ENCODE measurements at regions of chr6 and their contacts with region 1.

Region 1: GRCh38 chr6:98845211-98846020 is 11.0 kb downstream of the POU3F2 start:
- DNase-seq: peak; percentile 35 to 79 (median 60)
- ATAC-seq: peak; percentile 73
- H3K4me3 ChIP-seq: no peak overlapping the region
- H3K4me3 Mint-ChIP-seq: peak overlapping the region; percentile 76
- H3K27ac ChIP-seq: no peak overlapping the region
- H3K27ac Mint-ChIP-seq: no peak overlapping the region
- H3K4me1 ChIP-seq: peaks cover 43% of the 10 kb centered on the region
- H3K4me1 Mint-ChIP-seq: peaks cover 35% of the 10 kb centered on the region
- H3K27me3 ChIP-seq: peaks cover 80 to 88% of the 10 kb centered on the region in 2 experiments
- H3K27me3 Mint-ChIP-seq: peaks cover 90% of the 10 kb centered on the region
- CTCF ChIP-seq: peak; percentile 82

Region 2: GRCh38 chr6:97068211-97068610 is 1777.2 kb before region 1 on chr6:
- CTCF ChIA-PET with region 1: no interaction called
- POLR2A ChIA-PET with region 1: no interaction called
- intact Hi-C with region 1: loop called in 1 of 2 experiments (anchors 5 kb)
- DNase-seq: peak in 4 of 14 experiments; percentile 5 to 34 (median 15)
- ATAC-seq: no peak
- H3K4me3 ChIP-seq: no peak overlapping the region
- H3K4me3 Mint-ChIP-seq: no peak overlapping the region
- H3K27ac ChIP-seq: no peak overlapping the region
- H3K27ac Mint-ChIP-seq: no peak overlapping the region
- H3K4me1 ChIP-seq: no peaks in the 10 kb centered on the region
- H3K4me1 Mint-ChIP-seq: no peaks in the 10 kb centered on the region
- H3K27me3 ChIP-seq: no peaks in the 10 kb centered on the region
- H3K27me3 Mint-ChIP-seq: no peaks in the 10 kb centered on the region
- CTCF ChIP-seq: peak; percentile 39

Region 3: GRCh38 chr6:97186416-97186999 is 1658.9 kb before region 1 on chr6:
- CTCF ChIA-PET with region 1: no interaction called
- POLR2A ChIA-PET with region 1: no interaction called
- intact Hi-C with region 1: loop called (anchors 2 to 5 kb)
- DNase-seq: peak; percentile 36 to 77 (median 56)
- ATAC-seq: peak; percentile 77
- H3K4me3 ChIP-seq: no peak overlapping the region
- H3K4me3 Mint-ChIP-seq: no peak overlapping the region
- H3K27ac ChIP-seq: no peak overlapping the region
- H3K27ac Mint-ChIP-seq: no peak overlapping the region
- H3K4me1 ChIP-seq: no peaks in the 10 kb centered on the region
- H3K4me1 Mint-ChIP-seq: no peaks in the 10 kb centered on the region
- H3K27me3 ChIP-seq: no peaks in the 10 kb centered on the region
- H3K27me3 Mint-ChIP-seq: no peaks in the 10 kb centered on the region
- CTCF ChIP-seq: peak; percentile 97

Region 4: DNA sequence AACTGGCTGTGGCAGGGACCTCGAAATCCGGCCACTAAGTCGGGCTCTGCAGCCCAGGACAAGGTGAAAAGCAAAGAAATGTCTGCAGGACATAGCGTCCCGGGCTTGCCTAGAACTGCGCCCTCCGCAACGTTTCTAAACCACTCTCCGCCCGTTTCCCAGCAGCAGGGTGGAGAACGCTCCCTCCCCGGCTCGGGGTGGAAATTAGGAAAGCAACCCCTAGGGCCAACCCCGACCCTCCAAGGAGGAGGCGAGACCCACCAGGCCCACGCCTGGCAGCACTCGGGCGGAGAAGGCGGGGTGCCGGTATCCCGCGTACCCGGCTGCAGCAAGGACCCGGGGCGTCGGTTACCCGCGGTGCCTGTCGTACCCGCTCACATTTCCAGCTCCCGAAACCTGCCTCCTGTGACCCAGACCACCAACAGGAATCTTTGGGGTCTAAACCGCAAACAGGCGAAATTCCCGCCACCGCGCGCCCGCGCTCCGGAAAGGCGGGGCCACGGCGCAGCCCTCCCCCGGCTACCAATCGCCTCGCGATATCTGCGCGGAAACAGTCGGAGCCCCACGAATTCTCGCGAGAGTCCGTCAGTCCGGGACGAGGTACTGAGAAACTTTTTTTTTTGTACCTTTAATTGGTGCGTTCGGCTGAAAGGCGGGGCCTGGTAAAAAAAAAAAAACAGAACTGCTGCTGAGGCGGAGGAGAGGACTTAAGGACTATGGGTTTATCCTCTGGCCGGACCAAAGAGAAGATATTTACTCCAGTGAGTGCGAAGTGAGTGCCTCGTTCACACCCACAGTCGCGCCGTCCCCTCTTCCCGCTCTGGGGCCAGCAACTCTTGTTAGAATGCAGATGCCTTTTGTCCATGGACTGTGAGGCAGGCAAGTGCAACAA is 1562.4 kb before region 1 on chr6 and contains the start of gene MMS22L:
- CTCF ChIA-PET with region 1: no interaction called
- POLR2A ChIA-PET with region 1: no interaction called
- intact Hi-C with region 1: loop called in 1 of 2 experiments (anchors 10 kb)
- DNase-seq: peak; percentile 82 to 97 (median 90)
- ATAC-seq: peak; percentile 96
- H3K4me3 ChIP-seq: peak within 1 kb of the TSS; percentile 88
- H3K4me3 Mint-ChIP-seq: peak within 1 kb of the TSS; percentile 89
- H3K27ac ChIP-seq: peak within 1 kb of the TSS in 1 of 2 donors; percentile 38
- H3K27ac Mint-ChIP-seq: peak within 1 kb of the TSS; percentile 78
- H3K4me1 ChIP-seq: peaks cover 8% of the 10 kb centered on the region
- H3K4me1 Mint-ChIP-seq: peaks cover 28% of the 10 kb centered on the region
- H3K27me3 ChIP-seq: no peaks in the 10 kb centered on the region
- H3K27me3 Mint-ChIP-seq: no peaks in the 10 kb centered on the region
- CTCF ChIP-seq: no peak
- total RNA-seq, gene MMS22L: 5.3 to 5.8 TPM

Region 5: DNA sequence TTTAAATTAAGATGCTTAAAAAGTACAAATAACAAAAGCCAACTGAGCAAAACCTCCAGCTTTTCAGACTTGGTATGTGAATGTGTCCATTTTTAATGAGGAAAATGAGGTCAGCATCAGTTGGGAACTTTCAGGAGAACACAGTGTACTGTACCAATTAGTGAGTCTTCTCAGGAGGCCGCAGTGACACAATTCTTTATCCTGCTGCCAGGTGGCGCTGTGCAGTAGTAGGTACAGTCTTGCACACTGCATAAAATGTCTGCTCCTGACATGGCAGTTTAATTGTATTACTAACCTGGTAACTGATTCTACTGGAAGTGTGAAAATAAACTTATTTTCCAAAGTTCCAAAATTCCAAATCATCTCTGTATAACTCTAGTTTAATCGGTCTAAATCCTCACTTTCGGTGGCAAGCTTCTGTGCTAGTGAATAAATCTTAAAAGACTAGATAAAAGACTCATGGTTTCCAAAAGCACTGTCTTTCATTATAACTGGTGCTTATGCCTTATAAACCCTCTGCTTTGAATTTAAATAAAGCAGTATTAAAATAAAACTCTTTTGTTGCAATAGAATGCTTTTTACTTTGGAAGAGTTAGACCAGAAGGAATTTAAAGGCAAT is 1347.6 kb before region 1 on chr6:
- CTCF ChIA-PET with region 1: interaction called, 3 read pairs
- POLR2A ChIA-PET with region 1: no interaction called
- intact Hi-C with region 1: loop called (anchors 1 kb)
- DNase-seq: peak; percentile 17 to 76 (median 40)
- ATAC-seq: peak; percentile 84
- H3K4me3 ChIP-seq: no peak overlapping the region
- H3K4me3 Mint-ChIP-seq: no peak overlapping the region
- H3K27ac ChIP-seq: no peak overlapping the region
- H3K27ac Mint-ChIP-seq: no peak overlapping the region
- H3K4me1 ChIP-seq: no peaks in the 10 kb centered on the region
- H3K4me1 Mint-ChIP-seq: no peaks in the 10 kb centered on the region
- H3K27me3 ChIP-seq: peaks cover 0 to 4% of the 10 kb centered on the region in 2 experiments
- H3K27me3 Mint-ChIP-seq: peaks cover 29% of the 10 kb centered on the region
- CTCF ChIP-seq: peak; percentile 81

Region 6: DNA sequence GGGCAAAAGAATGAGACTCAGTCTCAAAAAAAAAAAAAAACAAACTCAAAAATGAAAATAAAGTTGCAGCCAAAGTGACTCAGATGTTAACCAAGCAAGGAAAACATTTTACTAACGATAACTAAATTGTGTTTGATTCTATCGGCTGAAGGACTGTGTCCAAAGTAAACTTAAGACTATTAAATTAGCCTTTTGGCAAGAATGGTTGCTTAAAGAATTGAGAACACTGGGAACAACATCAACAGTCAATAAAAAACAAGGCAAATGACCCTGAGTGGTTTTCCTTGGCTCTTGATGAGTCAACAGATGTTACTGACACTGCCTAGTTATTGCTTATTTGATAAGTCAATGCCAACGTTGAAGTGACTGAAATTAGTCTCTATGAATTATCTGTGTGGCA is 25.6 kb after region 1 on chr6:
- CTCF ChIA-PET with region 1: no interaction called
- POLR2A ChIA-PET with region 1: no interaction called
- intact Hi-C with region 1: no loop called
- DNase-seq: no peak
- ATAC-seq: no peak
- H3K4me3 ChIP-seq: no peak overlapping the region
- H3K4me3 Mint-ChIP-seq: no peak overlapping the region
- H3K27ac ChIP-seq: no peak overlapping the region
- H3K27ac Mint-ChIP-seq: no peak overlapping the region
- H3K4me1 ChIP-seq: no peaks in the 10 kb centered on the region
- H3K4me1 Mint-ChIP-seq: no peaks in the 10 kb centered on the region
- H3K27me3 ChIP-seq: no peaks in the 10 kb centered on the region
- H3K27me3 Mint-ChIP-seq: no peaks in the 10 kb centered on the region
- CTCF ChIP-seq: no peak

Region 7: DNA sequence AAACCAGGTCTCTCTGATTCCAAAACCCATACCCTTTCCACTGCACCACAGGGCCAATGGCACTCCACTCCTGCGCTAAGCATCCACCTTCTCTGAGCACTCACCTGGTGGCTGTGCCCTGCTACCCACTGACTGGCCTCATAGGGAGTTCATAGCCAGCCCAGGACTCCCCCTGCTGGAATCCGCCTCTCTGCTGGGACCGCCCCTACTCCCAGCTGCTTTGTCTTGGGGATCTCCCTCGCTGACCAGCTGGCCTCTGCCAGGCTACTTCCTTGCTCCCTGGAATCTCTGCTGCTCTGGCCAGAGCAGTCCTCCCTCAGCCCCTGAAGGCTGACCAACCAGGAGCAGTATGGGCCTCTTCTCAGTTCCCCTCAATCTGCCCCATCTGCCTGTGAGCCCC is 374.4 kb after region 1 on chr6:
- CTCF ChIA-PET with region 1: no interaction called
- POLR2A ChIA-PET with region 1: no interaction called
- intact Hi-C with region 1: no loop called
- DNase-seq: peak in 1 of 14 experiments; percentile 4
- ATAC-seq: no peak
- H3K4me3 ChIP-seq: no peak overlapping the region
- H3K4me3 Mint-ChIP-seq: no peak overlapping the region
- H3K27ac ChIP-seq: no peak overlapping the region
- H3K27ac Mint-ChIP-seq: no peak overlapping the region
- H3K4me1 ChIP-seq: no peaks in the 10 kb centered on the region
- H3K4me1 Mint-ChIP-seq: no peaks in the 10 kb centered on the region
- H3K27me3 ChIP-seq: no peaks in the 10 kb centered on the region
- H3K27me3 Mint-ChIP-seq: peaks cover 5% of the 10 kb centered on the region
- CTCF ChIP-seq: no peak

Region 8: GRCh38 chr6:99613409-99613704 is 767.9 kb after region 1 on chr6:
- CTCF ChIA-PET with region 1: no interaction called
- POLR2A ChIA-PET with region 1: no interaction called
- intact Hi-C with region 1: loop called in 1 of 2 experiments (anchors 10 kb)
- DNase-seq: peak in 5 of 14 experiments; percentile 27 to 66 (median 35)
- ATAC-seq: peak; percentile 51
- H3K4me3 ChIP-seq: peak overlapping the region; percentile 43
- H3K4me3 Mint-ChIP-seq: no peak overlapping the region
- H3K27ac ChIP-seq: no peak overlapping the region
- H3K27ac Mint-ChIP-seq: no peak overlapping the region
- H3K4me1 ChIP-seq: peaks cover 38% of the 10 kb centered on the region
- H3K4me1 Mint-ChIP-seq: peaks cover 38% of the 10 kb centered on the region
- H3K27me3 ChIP-seq: peaks cover 72 to 99% of the 10 kb centered on the region in 2 experiments
- H3K27me3 Mint-ChIP-seq: peaks cover 88% of the 10 kb centered on the region
- CTCF ChIP-seq: no peak

Measured in CD4-positive, alpha-beta T cell (primary cell).